ENCODE measurements at regions of chr12 and their contacts with region 1.

Region 1: DNA sequence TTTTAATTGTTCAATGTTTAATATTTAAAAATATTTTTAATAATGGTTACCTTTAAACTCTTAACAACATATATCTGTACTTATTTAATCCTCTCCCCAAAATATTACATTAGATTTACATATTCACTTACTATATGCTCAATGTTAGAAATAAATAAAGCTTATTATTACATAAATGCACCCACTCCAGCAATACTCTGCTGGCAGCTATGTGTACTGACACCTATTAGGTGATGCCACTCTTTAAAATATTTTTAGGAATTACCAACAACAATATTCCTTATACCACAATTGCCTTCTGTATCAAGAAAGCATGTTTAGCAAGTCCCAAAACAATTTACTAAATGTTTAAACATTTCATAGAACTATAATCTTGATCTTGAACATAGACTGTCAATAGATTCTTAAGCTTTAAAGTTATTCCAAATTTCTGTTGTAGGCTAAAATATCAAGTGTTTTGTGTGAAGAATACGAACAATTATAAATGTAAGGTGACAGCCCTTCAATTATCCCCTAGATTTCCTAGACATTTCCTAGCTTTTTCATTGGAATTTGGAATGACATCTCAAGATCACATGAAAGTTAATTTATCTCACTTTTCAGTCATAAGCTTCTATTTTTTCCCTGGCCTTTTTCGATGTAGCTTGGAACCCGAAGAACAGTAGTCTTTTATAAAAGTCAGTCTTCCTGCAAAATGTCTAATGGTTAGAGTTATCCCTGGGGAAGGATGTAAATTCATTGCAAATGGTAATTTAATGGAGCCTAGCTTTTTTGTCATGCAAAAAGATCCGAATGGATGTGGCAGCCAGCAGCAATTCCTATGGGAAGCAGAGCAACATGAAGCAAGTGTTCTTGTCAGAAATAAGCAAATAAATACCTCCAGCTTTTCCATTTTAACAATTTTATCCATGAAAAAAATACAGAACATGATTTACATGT is 907.5 kb upstream of the ATXN7L3B start:
- DNase-seq: no peak
- ATAC-seq: no peak
- H3K4me3 ChIP-seq: no peak overlapping the region
- H3K4me3 Mint-ChIP-seq: no peak overlapping the region
- H3K27ac ChIP-seq: no peak overlapping the region
- H3K27ac Mint-ChIP-seq: no peak overlapping the region
- H3K4me1 ChIP-seq: no peaks in the 10 kb centered on the region
- H3K4me1 Mint-ChIP-seq: no peaks in the 10 kb centered on the region
- H3K27me3 ChIP-seq: no peaks in the 10 kb centered on the region
- H3K27me3 Mint-ChIP-seq: no peaks in the 10 kb centered on the region
- CTCF ChIP-seq: no peak

Region 2: DNA sequence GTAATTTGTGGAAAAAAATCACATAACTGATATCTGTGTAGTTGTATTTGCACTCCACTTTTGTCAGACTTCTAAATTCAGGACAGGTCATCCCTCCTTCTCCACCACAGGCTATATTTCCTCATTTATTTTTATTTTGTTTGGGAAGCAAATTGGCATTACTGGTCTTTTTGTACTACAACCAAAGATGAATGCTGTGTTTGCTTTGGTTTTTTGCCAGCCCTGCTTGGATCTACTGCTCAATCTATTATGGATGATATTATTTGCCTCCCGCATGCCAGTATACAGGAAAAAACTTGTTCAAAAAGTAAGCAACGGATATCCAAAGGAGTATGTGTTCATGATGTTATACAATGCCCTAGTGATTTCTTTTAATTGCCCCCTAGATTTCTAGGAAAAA is 409.2 kb before region 1 on chr12:
- CTCF ChIA-PET with region 1: no interaction called
- POLR2A ChIA-PET with region 1: no interaction called
- intact Hi-C with region 1: no loop called
- DNase-seq: no peak
- ATAC-seq: no peak
- H3K4me3 ChIP-seq: no peak overlapping the region
- H3K4me3 Mint-ChIP-seq: no peak overlapping the region
- H3K27ac ChIP-seq: no peak overlapping the region
- H3K27ac Mint-ChIP-seq: no peak overlapping the region
- H3K4me1 ChIP-seq: no peaks in the 10 kb centered on the region
- H3K4me1 Mint-ChIP-seq: no peaks in the 10 kb centered on the region
- H3K27me3 ChIP-seq: no peaks in the 10 kb centered on the region
- H3K27me3 Mint-ChIP-seq: no peaks in the 10 kb centered on the region
- CTCF ChIP-seq: no peak

Region 3: GRCh38 chr12:73833746-73834145 is 203.6 kb after region 1 on chr12:
- CTCF ChIA-PET with region 1: no interaction called
- POLR2A ChIA-PET with region 1: no interaction called
- intact Hi-C with region 1: loop called in 1 of 2 experiments (anchors 5 kb)
- DNase-seq: no peak
- ATAC-seq: no peak
- H3K4me3 ChIP-seq: no peak overlapping the region
- H3K4me3 Mint-ChIP-seq: no peak overlapping the region
- H3K27ac ChIP-seq: no peak overlapping the region
- H3K27ac Mint-ChIP-seq: no peak overlapping the region
- H3K4me1 ChIP-seq: no peaks in the 10 kb centered on the region
- H3K4me1 Mint-ChIP-seq: no peaks in the 10 kb centered on the region
- H3K27me3 ChIP-seq: no peaks in the 10 kb centered on the region
- H3K27me3 Mint-ChIP-seq: no peaks in the 10 kb centered on the region
- CTCF ChIP-seq: no peak